Gastrocnemius medialis (tissue), 4 donors: ENCODE measurements at regions of chr19 and their contacts with region 1.

Region 1: GRCh38 chr19:17282488-17283255 is 971 bp downstream of the ANKLE1 start:
- DNase-seq: peak; percentile 61 to 74
- ATAC-seq: peak; percentile 85 to 89
- H3K4me3 ChIP-seq: peak overlapping the region; percentile 22 to 52 (median 44)
- H3K27ac ChIP-seq: no peak overlapping the region
- H3K4me1 ChIP-seq: peaks cover 4 to 11% of the 10 kb centered on the region in 2 donors
- H3K27me3 ChIP-seq: peaks cover 16% of the 10 kb centered on the region in 3 donors
- CTCF ChIP-seq: peak; percentile 79 to 96 (median 94)
- POLR2A ChIP-seq: no peak

Region 2: DNA sequence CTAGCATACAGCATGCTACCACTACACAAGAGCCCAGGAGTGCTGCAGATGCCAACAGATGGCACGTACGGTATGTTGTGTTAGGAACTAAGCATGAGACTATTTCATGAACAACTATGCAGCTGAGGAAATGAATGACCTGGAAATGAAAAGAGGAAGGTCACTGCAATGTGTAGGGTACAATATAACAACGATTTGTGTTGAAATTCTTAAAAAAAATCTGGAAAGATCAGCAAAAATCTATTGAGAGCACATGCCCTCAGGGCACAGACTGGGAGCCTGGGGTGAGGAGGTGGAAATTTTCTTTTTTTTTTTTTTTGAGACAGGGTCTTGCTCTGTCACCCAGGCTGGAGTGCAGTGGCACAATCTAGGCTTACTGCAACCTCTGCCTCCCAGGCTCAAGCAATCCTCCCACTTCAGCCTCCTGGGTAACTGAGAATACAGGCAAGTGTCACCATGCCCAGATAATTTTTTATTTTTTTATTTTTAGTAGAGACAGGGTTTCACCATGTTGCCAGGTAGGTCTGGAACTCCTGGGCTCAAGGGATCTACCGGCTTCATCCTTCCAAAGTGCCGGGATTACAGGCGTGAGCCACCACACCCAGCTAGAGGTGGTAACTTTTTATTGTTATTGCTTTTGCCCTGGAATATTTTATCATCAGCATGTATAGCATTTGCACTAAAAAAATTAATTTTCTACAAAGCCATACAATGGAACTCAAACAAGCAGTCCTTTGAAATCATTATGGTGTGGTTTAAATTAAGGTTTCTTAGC is 221.7 kb before region 1 on chr19:
- in situ Hi-C with region 1: loop called (anchors 5 kb)
- intact Hi-C with region 1: no loop called
- DNase-seq: no peak
- ATAC-seq: no peak
- H3K4me3 ChIP-seq: no peak overlapping the region
- H3K27ac ChIP-seq: no peak overlapping the region
- H3K4me1 ChIP-seq: no peaks in the 10 kb centered on the region
- H3K27me3 ChIP-seq: no peaks in the 10 kb centered on the region
- CTCF ChIP-seq: no peak
- POLR2A ChIP-seq: no peak

Region 3: GRCh38 chr19:17205237-17206140 is 77.2 kb before region 1 on chr19:
- in situ Hi-C with region 1: loop called in 1 of 4 experiments (anchors 10 kb)
- intact Hi-C with region 1: loop called (anchors 1 kb)
- DNase-seq: peak in 1 of 2 donors; percentile 30
- ATAC-seq: no peak
- H3K4me3 ChIP-seq: no peak overlapping the region
- H3K27ac ChIP-seq: no peak overlapping the region
- H3K4me1 ChIP-seq: no peaks in the 10 kb centered on the region
- H3K27me3 ChIP-seq: no peaks in the 10 kb centered on the region
- CTCF ChIP-seq: peak; percentile 39 to 68 (median 60)
- POLR2A ChIP-seq: no peak

Region 4: DNA sequence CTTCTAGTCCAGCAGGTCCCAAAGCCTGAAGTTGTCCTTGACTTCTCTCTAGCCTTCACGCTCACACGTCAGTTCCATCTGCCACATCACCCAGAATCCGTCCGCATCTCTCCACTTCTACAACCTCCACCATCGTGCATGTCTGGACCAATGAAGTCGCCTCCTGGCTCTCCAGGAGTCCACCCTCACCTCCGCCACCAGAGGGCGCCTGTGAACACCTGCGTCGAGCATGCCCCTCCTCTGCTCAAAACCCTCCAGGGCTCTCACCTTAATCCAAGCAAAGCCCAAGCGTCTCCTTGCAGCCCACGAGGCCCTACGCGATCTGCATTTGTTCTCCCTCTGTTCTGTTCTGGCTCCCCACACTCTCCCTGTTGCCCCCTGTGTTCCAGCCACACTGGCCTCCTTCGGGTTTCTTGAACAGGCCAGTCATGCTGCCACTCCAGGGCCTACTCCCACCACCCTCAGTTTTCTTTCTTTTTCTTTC is 21.8 kb before region 1 on chr19:
- in situ Hi-C with region 1: no loop called
- intact Hi-C with region 1: loop called (anchors 1 kb)
- DNase-seq: peak; percentile 57 to 77
- ATAC-seq: peak; percentile 92 to 98
- H3K4me3 ChIP-seq: no peak overlapping the region
- H3K27ac ChIP-seq: no peak overlapping the region
- H3K4me1 ChIP-seq: no peaks in the 10 kb centered on the region
- H3K27me3 ChIP-seq: no peaks in the 10 kb centered on the region
- CTCF ChIP-seq: peak; percentile 76 to 94 (median 88)
- POLR2A ChIP-seq: no peak